ENCODE measurements at regions of chr5 and their contacts with region 1.

Region 1: GRCh38 chr5:109688971-109689739 is 572 bp upstream of the MAN2A1 start:
- DNase-seq: peak; percentile 94 to 96 (median 95)
- ATAC-seq: peak; percentile 86
- H3K4me3 ChIP-seq: peak overlapping the region; percentile 91
- H3K27ac ChIP-seq: peak overlapping the region; percentile 92
- H3K4me1 ChIP-seq: peaks cover 14 to 27% of the 10 kb centered on the region in 2 experiments
- H3K27me3 ChIP-seq: no peaks in the 10 kb centered on the region
- CTCF ChIP-seq: peak in 2 of 3 experiments; percentile 17 to 27; a peak in 2 of 6 replicates
- EP300 ChIP-seq: no peak
- POLR2A ChIP-seq: peak; percentile 91
- RAD21 ChIP-seq: no peak; a peak in 2 of 4 replicates

Region 2: GRCh38 chr5:108642167-108642906 is 1046.8 kb before region 1 on chr5:
- CTCF ChIA-PET with region 1: no interaction called
- POLR2A ChIA-PET with region 1: no interaction called
- in situ Hi-C with region 1: no loop called
- intact Hi-C with region 1: loop called (anchors 10 kb)
- DNase-seq: peak; percentile 57 to 82 (median 68)
- ATAC-seq: peak; percentile 100
- H3K4me3 ChIP-seq: no peak overlapping the region
- H3K27ac ChIP-seq: peak overlapping the region; percentile 48; the same call in 1 of the 3 replicates
- H3K4me1 ChIP-seq: peaks cover 0 to 6% of the 10 kb centered on the region in 2 experiments; a peak in 1 of 5 replicates
- H3K27me3 ChIP-seq: no peaks in the 10 kb centered on the region; a peak in 1 of 5 replicates
- CTCF ChIP-seq: peak; percentile 82 to 92 (median 87)
- EP300 ChIP-seq: no peak
- POLR2A ChIP-seq: no peak
- RAD21 ChIP-seq: peak; percentile 89 to 91

Region 3: GRCh38 chr5:109574985-109575384 is 114.2 kb before region 1 on chr5:
- CTCF ChIA-PET with region 1: no interaction called
- POLR2A ChIA-PET with region 1: no interaction called
- in situ Hi-C with region 1: no loop called
- intact Hi-C with region 1: loop called (anchors 5 kb)
- DNase-seq: no peak
- ATAC-seq: no peak
- H3K4me3 ChIP-seq: no peak overlapping the region
- H3K27ac ChIP-seq: no peak overlapping the region
- H3K4me1 ChIP-seq: peaks cover 4 to 32% of the 10 kb centered on the region in 2 experiments; a peak in 4 of 5 replicates
- H3K27me3 ChIP-seq: no peaks in the 10 kb centered on the region
- CTCF ChIP-seq: no peak
- EP300 ChIP-seq: no peak
- POLR2A ChIP-seq: no peak
- RAD21 ChIP-seq: no peak

Region 4: DNA sequence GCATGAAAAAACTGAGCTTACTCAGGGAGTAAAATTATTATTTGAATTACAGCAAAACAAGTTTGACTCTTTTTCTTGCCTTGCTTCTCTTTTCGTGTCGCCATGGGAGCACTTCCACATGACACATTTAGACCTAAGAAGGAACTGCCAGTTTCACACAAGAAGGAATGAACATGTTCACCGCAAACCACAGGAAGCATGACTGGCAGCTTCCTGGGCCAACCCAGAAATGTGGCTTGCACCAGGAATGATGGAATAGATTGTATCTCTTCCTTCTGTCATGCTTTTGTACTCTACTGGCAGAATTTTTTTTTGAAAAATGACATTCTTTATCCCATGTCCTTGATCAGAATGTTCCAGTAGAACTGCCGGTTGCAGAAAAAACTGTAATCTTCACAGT is 32.3 kb before region 1 on chr5:
- CTCF ChIA-PET with region 1: no interaction called
- POLR2A ChIA-PET with region 1: no interaction called
- in situ Hi-C with region 1: no loop called
- intact Hi-C with region 1: no loop called
- DNase-seq: peak; percentile 23 to 80 (median 32)
- ATAC-seq: peak; percentile 83
- H3K4me3 ChIP-seq: no peak overlapping the region
- H3K27ac ChIP-seq: peak overlapping the region; percentile 62
- H3K4me1 ChIP-seq: peaks cover 0 to 8% of the 10 kb centered on the region in 2 experiments; a peak in 3 of 5 replicates
- H3K27me3 ChIP-seq: no peaks in the 10 kb centered on the region
- CTCF ChIP-seq: no peak
- EP300 ChIP-seq: peak; percentile 28; the same call in 1 of the 2 replicates
- POLR2A ChIP-seq: no peak
- RAD21 ChIP-seq: peak in 1 of 2 experiments; percentile 18; a peak in 1 of 4 replicates

Region 5: GRCh38 chr5:109703829-109704228 is 14.7 kb after region 1 on chr5:
- CTCF ChIA-PET with region 1: no interaction called
- POLR2A ChIA-PET with region 1: interaction called, 21 read pairs
- in situ Hi-C with region 1: no loop called
- intact Hi-C with region 1: no loop called
- DNase-seq: peak; percentile 82 to 91 (median 84)
- ATAC-seq: peak; percentile 87
- H3K4me3 ChIP-seq: no peak overlapping the region
- H3K27ac ChIP-seq: peak overlapping the region; percentile 68
- H3K4me1 ChIP-seq: peaks cover 20 to 70% of the 10 kb centered on the region in 2 experiments
- H3K27me3 ChIP-seq: no peaks in the 10 kb centered on the region
- CTCF ChIP-seq: no peak
- EP300 ChIP-seq: peak; percentile 92
- POLR2A ChIP-seq: no peak
- RAD21 ChIP-seq: no peak

Region 6: DNA sequence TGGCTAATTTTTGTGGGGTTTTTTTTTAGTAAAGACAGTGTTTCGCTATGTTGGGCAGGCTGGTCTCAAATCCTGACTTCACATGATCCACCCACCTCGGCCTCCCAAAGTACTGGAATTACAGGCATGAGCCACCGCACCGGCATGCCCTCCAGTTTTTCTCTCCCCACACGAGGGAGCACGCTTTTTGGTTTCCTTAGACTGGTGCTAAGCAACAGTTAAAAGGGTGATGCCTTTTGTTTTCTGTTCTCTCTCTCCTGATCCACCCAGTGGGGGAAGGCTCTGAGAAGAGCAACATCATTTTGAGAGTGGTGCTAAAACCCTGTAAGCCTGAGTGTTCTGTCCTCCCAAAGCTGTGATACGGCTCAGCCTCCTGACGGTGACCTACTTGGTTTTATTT is 147.1 kb after region 1 on chr5:
- CTCF ChIA-PET with region 1: no interaction called
- POLR2A ChIA-PET with region 1: no interaction called
- in situ Hi-C with region 1: no loop called
- intact Hi-C with region 1: no loop called
- DNase-seq: no peak
- ATAC-seq: no peak
- H3K4me3 ChIP-seq: no peak overlapping the region
- H3K27ac ChIP-seq: no peak overlapping the region
- H3K4me1 ChIP-seq: no peaks in the 10 kb centered on the region
- H3K27me3 ChIP-seq: no peaks in the 10 kb centered on the region
- CTCF ChIP-seq: no peak
- EP300 ChIP-seq: no peak
- POLR2A ChIP-seq: no peak
- RAD21 ChIP-seq: no peak

Region 7: DNA sequence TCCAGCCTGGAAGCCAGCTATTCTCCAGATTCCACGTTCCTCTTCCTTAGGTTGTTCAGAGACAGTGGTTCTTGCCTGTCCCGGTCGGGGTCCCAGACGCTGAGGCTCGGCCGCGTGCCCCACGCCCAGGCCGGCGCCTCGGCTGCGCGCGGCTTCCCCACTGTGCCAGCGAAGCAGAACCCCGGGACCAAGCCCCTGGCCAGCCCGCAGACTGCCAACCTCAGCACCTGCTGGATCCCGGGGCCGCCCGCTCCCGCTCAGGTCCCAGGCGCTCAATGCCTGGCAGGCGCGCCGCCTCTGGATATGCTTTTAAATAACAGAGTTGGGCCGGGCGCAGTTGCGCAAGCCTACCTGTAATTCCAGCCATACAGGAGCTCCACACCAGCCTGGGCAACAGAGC is 196.1 kb after region 1 on chr5:
- CTCF ChIA-PET with region 1: no interaction called
- POLR2A ChIA-PET with region 1: no interaction called
- in situ Hi-C with region 1: no loop called
- intact Hi-C with region 1: no loop called
- DNase-seq: no peak
- ATAC-seq: no peak
- H3K4me3 ChIP-seq: no peak overlapping the region
- H3K27ac ChIP-seq: no peak overlapping the region
- H3K4me1 ChIP-seq: no peaks in the 10 kb centered on the region; a peak in 1 of 5 replicates
- H3K27me3 ChIP-seq: peaks cover 15 to 28% of the 10 kb centered on the region in 2 experiments; a peak in 4 of 5 replicates
- CTCF ChIP-seq: no peak
- EP300 ChIP-seq: no peak
- POLR2A ChIP-seq: no peak
- RAD21 ChIP-seq: no peak

Region 8: GRCh38 chr5:109959652-109960051 is 270.5 kb after region 1 on chr5:
- CTCF ChIA-PET with region 1: no interaction called
- POLR2A ChIA-PET with region 1: no interaction called
- in situ Hi-C with region 1: no loop called
- intact Hi-C with region 1: loop called (anchors 10 kb)
- DNase-seq: peak in 3 of 4 experiments; percentile 9 to 37 (median 29)
- ATAC-seq: peak; percentile 81
- H3K4me3 ChIP-seq: no peak overlapping the region
- H3K27ac ChIP-seq: no peak overlapping the region
- H3K4me1 ChIP-seq: no peaks in the 10 kb centered on the region
- H3K27me3 ChIP-seq: no peaks in the 10 kb centered on the region
- CTCF ChIP-seq: peak in 2 of 3 experiments; percentile 24 to 41; a peak in 1 of 6 replicates
- EP300 ChIP-seq: no peak
- POLR2A ChIP-seq: no peak
- RAD21 ChIP-seq: no peak